Dendritic cell treated with granulocyte-macrophage colony-stimulating factor and Interleukin-4, amounts not matched to agents 40 ng/mL and 50 ng/mL, for 4 days (primary cell): ENCODE measurements at regions of chr15 and their contacts with region 1.

Region 1: DNA sequence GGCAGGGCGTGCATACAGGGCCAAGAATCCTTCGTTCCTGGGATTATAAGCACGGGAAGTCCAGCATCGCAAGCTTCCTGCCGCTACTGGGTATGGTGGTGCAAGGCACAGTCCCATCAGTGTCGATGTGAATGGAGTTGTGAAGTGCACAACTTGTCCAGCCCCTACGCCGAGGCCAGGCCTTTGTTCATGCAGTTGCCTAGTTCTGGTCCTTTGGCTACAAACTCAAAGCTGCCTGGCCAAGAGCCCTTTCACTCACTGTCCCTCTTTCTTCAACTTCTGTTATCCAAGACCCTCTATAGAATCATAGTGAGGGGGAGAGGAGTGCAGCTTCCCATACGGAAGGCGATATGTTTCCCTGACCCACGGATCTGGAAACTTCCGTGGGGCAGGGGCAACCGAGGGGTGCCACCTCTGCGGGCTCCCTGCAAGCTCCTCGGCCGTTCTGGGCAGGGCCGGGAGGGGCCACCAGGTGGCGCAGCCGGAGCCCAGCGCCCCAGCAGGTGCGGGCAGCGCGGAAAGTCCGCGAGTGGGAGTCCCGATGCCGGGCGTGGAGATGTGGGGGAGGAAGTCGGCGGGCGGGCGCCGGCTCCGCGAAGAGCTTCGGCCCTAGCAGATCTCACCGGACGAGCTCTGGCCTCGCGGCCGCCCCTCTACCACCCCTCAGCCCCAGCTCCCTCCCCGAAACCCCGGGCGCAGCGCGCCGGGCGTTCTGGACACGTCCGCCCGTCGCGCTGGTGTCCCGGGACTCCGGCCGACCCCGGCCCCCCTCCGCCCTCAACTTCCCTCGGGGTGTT is 693 bp downstream of the RASGRP1 start:
- H3K4me3 Mint-ChIP-seq: peak overlapping the region; percentile 69
- H3K27ac Mint-ChIP-seq: peak overlapping the region; percentile 12
- H3K4me1 Mint-ChIP-seq: peaks cover 20% of the 10 kb centered on the region
- H3K27me3 Mint-ChIP-seq: peaks cover 41% of the 10 kb centered on the region

Region 2: GRCh38 chr15:37995461-37996347 is 568.2 kb before region 1 on chr15:
- intact Hi-C with region 1: loop called (anchors 5 kb)
- H3K4me3 Mint-ChIP-seq: no peak overlapping the region
- H3K27ac Mint-ChIP-seq: peak overlapping the region; percentile 53
- H3K4me1 Mint-ChIP-seq: peaks cover 11% of the 10 kb centered on the region
- H3K27me3 Mint-ChIP-seq: peaks cover 8% of the 10 kb centered on the region

Region 3: GRCh38 chr15:38474155-38474757 is 89.7 kb before region 1 on chr15:
- intact Hi-C with region 1: loop called (anchors 10 kb)
- H3K4me3 Mint-ChIP-seq: no peak overlapping the region
- H3K27ac Mint-ChIP-seq: no peak overlapping the region
- H3K4me1 Mint-ChIP-seq: peaks cover 2% of the 10 kb centered on the region
- H3K27me3 Mint-ChIP-seq: no peaks in the 10 kb centered on the region

Region 4: DNA sequence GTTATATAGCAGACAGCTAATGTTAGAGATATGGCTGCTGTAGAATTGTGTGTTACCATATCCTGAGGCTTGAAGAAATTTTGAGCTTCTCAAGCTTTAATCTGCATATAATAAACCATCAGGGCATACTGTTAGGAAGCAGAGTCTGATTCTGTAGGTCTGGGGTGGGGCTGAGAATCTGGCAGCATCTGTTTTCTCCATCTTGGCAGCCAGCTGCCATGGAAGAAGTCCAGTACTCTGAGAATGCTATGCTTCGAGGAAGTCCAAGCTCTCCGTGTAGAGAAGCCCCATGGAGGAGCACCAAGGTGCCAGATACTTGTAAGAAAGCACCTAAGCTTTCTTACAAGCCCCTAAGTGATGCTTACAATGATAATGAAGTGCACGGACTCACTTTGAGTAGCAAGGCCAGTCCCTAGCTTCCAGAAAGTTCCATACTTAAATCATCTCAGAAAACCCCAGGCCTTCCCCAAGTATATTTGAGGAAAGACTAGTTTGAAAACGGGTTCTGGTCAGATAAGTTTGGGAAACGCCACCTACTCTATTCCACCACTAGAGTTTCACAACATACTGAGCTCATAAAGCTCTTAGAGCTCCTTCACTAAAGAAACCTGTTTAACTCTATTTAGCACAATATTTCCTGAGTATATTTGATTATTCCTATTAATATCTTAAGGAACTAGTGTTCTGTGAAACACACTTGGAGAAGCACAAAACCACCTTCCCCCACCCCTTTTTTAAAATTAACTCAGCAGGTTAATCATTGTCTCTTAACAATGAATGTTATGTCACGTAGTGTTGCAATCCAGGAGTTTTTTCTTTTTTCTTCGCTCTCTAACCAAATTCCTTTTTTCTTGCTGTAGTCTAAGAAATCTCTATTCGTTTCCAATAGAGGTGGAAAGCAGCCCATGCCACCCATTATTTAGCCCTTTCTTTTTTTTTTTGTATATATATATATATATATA is 60.6 kb after region 1 on chr15:
- intact Hi-C with region 1: loop called (anchors 10 kb)
- H3K4me3 Mint-ChIP-seq: no peak overlapping the region
- H3K27ac Mint-ChIP-seq: peak overlapping the region; percentile 32
- H3K4me1 Mint-ChIP-seq: peaks cover 65% of the 10 kb centered on the region
- H3K27me3 Mint-ChIP-seq: peaks cover 5% of the 10 kb centered on the region

Region 5: DNA sequence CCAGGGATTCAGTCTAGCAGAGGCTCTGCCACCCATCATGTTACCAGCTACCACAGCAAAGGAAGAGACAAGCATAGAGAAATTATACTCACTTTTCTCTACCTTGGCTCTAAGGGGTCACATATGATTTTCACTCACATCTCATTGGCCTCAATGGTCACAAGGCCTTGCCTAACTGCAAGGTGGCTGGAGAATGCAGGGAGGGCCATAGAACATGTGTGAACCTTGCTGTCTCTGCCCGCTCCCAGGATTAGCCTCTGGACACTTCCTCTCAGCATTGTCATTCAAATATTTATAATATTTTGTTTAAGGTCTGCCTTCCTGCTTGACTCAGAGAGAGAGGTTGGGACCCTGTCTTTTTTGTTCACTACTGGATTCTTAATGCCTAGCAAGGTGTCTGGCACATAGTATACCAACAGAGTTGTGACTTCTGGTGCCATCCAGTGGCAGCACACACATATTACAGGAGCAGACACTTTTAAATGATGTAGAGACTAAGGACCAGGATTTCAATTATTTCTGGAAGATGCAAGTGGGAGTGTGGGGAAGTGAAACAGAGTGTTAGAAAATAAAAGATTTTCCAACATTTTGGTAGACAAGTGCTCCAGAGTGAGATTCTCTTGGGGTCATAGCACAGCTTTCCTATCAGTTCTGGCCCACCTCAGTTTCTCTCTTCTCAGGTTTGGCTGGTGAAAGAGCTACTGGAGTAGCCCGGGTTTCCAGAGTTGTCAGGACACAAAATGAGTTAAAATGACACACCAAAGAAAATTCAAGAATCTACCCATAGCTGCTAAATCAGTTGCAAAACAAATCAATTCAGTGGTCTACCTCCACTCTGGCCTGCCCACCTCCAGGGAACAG is 119.7 kb after region 1 on chr15:
- intact Hi-C with region 1: loop called (anchors 1 kb)
- H3K4me3 Mint-ChIP-seq: no peak overlapping the region
- H3K27ac Mint-ChIP-seq: no peak overlapping the region
- H3K4me1 Mint-ChIP-seq: peaks cover 32% of the 10 kb centered on the region
- H3K27me3 Mint-ChIP-seq: no peaks in the 10 kb centered on the region